ENCODE measurements at regions of chr15 and their contacts with region 1.

Region 1: GRCh38 chr15:74768771-74769342 is 13.0 kb upstream of the CSK start:
- DNase-seq: peak; percentile 86

Region 2: DNA sequence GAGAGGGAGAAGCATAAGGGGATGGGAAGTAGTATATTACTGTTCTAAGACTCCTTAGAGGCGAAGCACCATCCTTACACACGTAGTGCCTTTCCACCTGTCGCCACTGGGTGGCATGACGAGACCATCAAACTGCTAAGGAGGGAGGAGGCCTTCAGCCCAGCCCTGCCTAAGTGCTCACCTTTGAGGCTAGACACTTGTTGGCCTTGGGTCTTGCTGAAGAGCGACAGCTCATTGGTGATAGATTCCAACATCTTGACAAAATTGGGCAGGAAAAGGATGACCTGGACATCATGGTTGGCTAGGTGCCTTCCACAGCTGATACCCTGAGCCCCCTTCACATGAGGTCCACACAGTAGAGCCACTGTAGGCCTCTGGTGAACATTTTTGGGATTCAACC is 133.6 kb before region 1 on chr15:
- CTCF ChIA-PET with region 1: interaction called, 205 read pairs
- POLR2A ChIA-PET with region 1: interaction called, 10 read pairs
- DNase-seq: peak; percentile 83

Region 3: GRCh38 chr15:74723754-74724334 is 45.0 kb before region 1 on chr15:
- CTCF ChIA-PET with region 1: interaction called, 14 read pairs
- POLR2A ChIA-PET with region 1: interaction called, 3 read pairs
- DNase-seq: peak; percentile 72

Region 4: DNA sequence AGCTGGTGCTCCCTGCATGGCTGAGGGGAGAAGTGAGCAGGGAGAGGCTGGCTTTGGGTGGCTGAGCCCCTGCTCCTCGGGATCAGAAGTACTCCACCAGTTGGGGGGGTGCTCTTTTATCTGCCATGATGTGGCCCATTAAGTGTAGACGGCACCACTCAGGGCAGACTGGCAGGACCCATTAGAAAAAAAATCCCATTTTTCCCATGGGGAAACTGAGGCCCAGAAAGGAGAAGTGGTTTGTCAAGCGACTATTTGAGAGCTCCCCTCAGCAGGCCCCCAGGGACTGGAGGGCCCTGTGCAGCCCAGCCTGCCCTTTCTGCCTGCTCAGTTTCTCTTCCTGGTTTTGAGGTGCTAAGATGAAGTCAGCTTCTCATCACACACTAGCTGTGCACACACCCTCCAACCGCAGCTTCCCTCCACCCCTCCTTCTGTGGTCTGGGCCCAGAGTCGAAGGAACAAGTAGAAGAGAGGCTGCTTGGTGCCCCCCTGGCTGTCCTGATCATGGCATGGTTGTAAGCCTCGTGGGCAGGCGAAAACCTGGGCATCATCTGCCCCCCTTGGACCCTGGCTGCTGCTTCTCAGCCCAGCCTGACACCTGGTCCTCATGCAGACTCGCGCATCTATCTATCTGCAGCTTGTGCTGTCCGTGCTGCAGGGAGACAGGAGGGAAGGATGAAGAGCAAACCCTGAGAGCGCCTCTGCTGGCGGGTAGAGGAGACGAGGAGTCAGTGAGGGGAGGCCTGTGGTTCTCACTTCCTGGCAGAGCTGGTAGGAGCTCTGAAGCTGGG is 18.6 kb after region 1 on chr15:
- CTCF ChIA-PET with region 1: interaction called, 75 read pairs
- POLR2A ChIA-PET with region 1: interaction called, 3 read pairs
- DNase-seq: peak; percentile 81

Region 5: DNA sequence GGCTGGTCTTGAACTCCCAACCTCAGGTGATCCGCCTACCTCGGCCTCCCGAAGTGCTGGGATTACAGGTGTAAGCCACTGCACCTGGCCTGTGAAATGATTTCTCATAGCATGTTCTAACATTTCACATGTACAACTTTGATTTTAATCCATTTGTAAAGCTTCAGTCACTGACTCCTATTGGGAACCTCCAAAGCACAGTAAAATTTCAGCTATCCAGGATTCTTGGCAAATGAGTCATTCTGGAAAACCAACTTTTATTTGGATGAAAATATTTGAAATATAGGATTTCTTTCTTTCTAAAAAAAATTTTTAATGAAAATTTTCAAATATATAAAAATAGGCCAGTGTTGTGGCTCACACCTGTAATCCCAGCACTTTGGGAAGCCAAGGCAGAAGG is 41.1 kb after region 1 on chr15:
- CTCF ChIA-PET with region 1: interaction called, 10 read pairs
- POLR2A ChIA-PET with region 1: interaction called, 4 read pairs
- DNase-seq: no peak

Region 6: DNA sequence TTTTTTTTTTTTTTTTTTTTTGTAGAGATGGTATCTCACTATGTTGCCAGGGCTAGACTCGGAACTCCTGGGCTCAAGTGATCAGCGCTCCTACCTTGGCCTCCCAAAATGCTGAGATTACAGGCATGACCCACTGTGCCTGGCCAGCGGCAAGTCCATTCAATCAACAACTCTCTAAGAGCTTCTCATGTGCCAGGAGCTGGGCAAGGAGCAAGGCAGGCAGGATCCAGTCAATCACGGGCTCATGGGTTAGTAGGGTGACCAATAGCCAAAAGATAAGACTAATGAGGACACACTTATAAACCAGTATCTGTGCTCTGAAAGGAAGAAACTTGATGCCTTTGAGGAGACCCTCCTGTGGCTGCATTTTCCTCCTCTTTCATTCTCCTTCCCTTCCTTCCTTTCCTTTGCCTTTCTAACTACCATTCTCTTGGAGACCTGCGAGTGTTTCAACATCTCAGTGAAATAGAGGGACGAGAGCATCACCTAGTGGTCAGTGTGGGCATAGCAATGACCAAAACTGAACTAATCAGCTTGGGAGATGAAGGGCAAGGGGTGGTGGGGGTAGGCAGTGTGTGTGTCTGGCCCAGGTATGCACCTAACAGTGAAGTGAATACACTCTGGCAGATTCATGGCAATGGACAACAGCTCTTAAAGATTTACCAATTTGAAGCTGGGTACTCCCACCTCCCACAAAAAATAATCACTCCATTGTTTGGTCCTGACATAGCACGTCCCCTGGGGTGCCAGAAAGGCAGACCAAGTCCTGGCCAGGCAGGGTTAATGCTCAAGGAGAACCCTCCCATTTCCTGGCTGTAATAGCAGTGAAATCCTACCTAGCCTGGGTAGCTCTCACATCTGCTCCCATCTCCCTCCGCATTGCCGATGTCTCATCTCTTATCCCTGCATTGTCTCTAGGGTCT is 181.5 kb after region 1 on chr15:
- CTCF ChIA-PET with region 1: interaction called, 24 read pairs
- POLR2A ChIA-PET with region 1: interaction called, 4 read pairs
- DNase-seq: peak; percentile 82

Region 7: DNA sequence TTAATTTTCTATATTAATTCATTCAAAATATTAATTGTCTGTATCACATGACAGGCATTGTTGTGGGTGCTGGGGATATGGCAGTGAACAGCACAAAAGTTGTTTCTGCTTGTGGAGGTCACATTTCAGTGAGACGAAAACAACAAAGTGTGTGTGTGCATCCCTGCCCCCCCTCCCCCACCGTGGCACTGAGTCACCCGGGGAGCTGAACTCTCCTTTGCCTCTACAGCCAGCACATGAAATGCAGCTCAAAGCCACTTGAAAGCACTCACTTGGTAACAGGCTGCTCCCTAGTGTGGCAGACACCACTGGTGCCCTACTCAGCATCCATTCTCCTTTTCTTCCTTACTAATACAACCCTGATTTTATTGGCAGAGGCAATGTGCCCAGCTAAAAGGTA is 209.6 kb after region 1 on chr15:
- CTCF ChIA-PET with region 1: no interaction called
- POLR2A ChIA-PET with region 1: no interaction called
- DNase-seq: no peak

Measured in HEK293T (cell line).